AG04450 (cell line): ENCODE measurements at regions of chr4 and their contacts with region 1.

Region 1: DNA sequence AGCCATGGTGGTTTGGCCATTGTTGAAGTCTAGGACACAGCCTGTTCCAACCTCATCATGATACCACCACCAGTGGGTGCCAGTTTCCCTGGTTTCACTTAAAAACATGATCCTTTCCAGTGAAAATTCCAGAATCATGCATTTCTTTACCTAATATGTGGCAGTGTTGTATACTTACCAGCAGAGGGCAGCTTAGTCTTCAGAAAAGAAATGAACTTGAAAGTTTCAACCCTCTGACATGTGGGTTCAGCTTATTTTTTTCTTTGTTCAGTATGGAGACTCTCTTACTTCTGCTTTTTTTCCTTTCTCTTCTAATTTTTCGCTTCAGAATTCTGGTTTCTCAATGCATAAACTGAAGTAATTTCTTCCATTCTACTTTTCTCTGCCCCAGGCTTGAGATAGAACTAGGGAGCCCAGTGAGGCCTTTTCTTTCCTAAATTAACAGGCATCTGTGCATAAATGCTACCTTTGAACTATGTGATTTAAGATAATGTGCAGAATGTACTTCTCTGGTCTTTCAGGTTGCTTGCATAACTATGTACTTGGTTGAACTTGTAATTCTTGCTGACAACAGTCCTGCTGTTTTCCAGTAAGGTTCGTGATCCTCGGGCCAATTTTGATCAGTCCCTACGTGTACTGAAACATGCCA is 10.7 kb downstream of the LIAS start:
- DNase-seq: peak; percentile 55
- H3K4me3 ChIP-seq: no peak overlapping the region
- H3K27ac ChIP-seq: no peak overlapping the region
- H3K27me3 ChIP-seq: no peaks in the 10 kb centered on the region
- CTCF ChIP-seq: peak; percentile 87

Region 2: DNA sequence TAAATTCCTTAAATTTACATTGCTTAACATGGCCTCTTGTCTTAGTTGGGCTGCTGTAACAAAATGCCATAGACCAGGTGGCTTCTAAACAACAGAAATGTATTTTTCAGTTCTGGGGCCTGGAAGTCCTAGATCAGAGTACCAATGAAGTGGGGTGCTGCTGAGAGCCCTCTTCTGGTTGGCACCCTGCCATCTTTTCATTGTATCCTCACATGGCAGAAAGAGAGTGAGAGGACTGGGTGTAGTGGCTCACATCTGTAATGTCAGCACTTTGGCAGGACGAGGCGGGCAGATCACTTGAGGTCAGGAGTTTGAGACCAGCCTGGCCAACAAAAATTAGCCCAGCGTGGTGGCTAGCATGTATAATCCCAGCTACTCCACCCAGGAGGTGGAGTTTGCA is 74.9 kb before region 1 on chr4:
- CTCF ChIA-PET with region 1: no interaction called
- POLR2A ChIA-PET with region 1: no interaction called
- DNase-seq: no peak
- H3K4me3 ChIP-seq: no peak overlapping the region
- H3K27ac ChIP-seq: no peak overlapping the region
- H3K27me3 ChIP-seq: peaks cover 6% of the 10 kb centered on the region
- CTCF ChIP-seq: no peak

Region 3: GRCh38 chr4:39458505-39459300 is 10.8 kb before region 1 on chr4 and contains the starts of genes LIAS and RPL9:
- CTCF ChIA-PET with region 1: interaction called, 11 read pairs
- POLR2A ChIA-PET with region 1: interaction called, 4 read pairs
- DNase-seq: peak; percentile 99
- H3K4me3 ChIP-seq: peak within 1 kb of the TSS; percentile 95
- H3K27ac ChIP-seq: peak within 1 kb of the TSS; percentile 94
- H3K27me3 ChIP-seq: no peaks in the 10 kb centered on the region
- CTCF ChIP-seq: no peak
- polyA plus RNA-seq, gene LIAS: 8.6 and 13.1 TPM in 2 replicates
- polyA plus RNA-seq, gene RPL9: 2,183 and 3,111 TPM in 2 replicates

Region 4: DNA sequence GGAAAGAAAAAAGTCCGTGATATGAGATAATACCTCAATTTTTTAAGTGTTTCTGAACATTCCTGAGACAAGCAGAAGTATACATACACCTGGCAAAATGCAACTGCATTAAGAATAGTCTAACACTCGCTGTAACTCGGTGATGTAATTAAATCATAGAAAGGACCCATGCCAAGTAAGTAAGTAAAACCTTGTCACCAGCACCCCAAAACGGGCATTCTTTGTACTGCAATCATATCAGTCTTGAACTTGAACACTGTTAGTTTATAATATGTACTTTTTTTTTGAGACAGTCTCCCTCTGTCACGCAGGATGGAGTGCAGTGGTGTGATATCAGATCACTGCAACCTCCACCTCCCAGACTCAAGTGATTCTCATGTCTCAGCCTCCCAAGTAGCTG is 121.7 kb after region 1 on chr4:
- CTCF ChIA-PET with region 1: interaction called, 16 read pairs
- POLR2A ChIA-PET with region 1: no interaction called
- DNase-seq: no peak
- H3K4me3 ChIP-seq: no peak overlapping the region
- H3K27ac ChIP-seq: no peak overlapping the region
- H3K27me3 ChIP-seq: no peaks in the 10 kb centered on the region
- CTCF ChIP-seq: peak; percentile 51

Region 5: DNA sequence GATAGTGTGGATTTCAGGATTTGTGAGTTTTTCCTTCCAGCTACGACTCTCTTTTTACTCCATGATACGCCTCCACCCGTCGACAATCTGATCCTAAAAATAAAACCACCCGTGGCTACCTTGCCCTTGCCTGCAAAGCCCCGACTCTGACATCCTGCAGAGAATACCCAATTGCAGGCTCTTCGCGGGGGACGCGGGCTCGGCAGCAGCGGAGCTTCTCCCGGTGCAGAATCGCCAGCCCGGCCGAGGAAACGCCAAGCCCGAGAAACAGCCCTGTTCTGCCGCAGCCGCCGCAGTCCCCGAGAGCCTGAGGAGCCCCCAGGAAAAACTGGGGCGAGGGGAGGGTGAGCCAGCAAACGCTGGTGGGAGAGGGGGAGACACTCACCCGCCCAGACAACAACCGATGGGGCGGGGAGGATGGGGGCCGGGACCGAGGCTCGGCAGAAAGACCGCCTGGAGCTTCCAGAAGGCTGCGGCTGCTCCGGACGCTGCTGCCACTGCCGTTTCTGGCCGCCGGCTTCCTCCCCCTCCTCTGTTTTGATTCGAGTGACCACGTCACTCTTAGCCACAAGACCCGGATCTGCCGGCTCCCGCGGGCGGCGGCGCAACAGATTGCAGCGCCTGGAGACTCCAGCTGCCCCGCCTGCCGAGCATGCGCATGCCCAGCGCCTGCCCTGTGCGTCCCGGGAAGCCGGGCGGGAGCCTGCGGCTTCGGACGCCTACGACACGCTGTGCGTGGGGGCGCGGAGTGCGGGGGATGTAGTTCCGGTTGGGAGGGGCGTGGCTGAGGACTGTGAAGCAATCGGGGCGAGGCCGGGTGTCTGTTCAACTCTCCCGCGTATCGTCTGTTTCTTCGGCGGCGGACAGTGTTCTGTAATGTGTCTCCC is 169.0 kb after region 1 on chr4 and contains the start of gene SMIM14:
- CTCF ChIA-PET with region 1: interaction called, 10 read pairs
- POLR2A ChIA-PET with region 1: interaction called, 8 read pairs
- DNase-seq: peak; percentile 96
- H3K4me3 ChIP-seq: peak within 1 kb of the TSS; percentile 70
- H3K27ac ChIP-seq: peak within 1 kb of the TSS; percentile 93
- H3K27me3 ChIP-seq: no peaks in the 10 kb centered on the region
- CTCF ChIP-seq: no peak
- polyA plus RNA-seq, gene SMIM14: 48.0 and 53.7 TPM in 2 replicates

Region 6: GRCh38 chr4:39977489-39978377 is 508.2 kb after region 1 on chr4 and contains the start of gene PDS5A:
- CTCF ChIA-PET with region 1: interaction called, 23 read pairs
- POLR2A ChIA-PET with region 1: no interaction called
- DNase-seq: peak; percentile 54
- H3K4me3 ChIP-seq: peak within 1 kb of the TSS; percentile 78
- H3K27ac ChIP-seq: peak within 1 kb of the TSS; percentile 81
- H3K27me3 ChIP-seq: no peaks in the 10 kb centered on the region
- CTCF ChIP-seq: peak; percentile 71
- polyA plus RNA-seq, gene PDS5A: 38.2 and 49.5 TPM in 2 replicates